Activated CD4-positive, alpha-beta T cell treated with anti-CD3 and anti-CD28 coated beads, Interleukin-2, amount 10 ng/mL, durations not matched to agents 24 days and 14 days (primary cell): ENCODE measurements at regions of chr17 and their contacts with region 1.

Region 1: DNA sequence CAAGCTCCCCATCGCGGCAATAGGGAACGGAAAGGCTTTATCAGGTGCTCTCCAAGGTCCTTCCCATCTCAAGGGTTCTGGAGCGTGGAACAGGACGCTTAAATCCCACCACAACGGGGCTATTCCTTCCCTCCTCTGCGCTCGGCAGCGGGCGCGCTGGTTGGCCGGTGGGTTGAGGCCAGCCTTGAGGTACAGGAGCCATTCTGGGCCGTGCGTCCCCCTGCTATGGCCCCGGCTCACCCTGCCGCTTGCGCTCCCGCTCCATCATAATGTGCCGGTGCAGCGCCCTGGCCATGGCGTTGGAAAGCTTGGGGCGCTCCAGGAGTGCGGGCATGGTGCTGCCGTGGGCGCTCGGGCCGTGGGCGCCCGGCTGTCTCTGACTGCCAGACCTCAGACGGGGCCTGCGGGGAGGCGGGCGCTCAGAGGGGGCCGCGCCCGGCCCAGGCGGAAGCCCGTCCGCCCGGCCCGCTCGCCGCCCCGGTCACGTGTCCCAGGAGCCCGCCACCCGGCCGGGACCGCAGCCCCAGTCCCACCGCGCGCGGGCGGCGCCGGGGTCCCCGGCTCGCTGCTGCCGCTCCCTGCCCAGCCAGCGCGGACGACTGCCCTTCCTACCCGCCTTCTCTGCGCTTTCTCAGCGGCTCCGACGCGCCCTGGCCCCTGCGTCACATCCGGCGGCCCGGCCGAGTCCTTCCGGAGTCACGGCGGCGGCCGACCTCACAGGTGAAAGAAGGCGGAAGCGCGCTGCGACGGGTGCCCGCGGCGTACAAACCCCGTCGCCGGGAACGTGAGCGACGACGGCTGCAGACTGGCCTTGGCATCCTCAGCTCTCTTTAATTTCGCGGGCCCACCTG is at the start of gene GPS2:
- DNase-seq: peak; percentile 99
- H3K4me3 Mint-ChIP-seq: peak within 1 kb of the TSS; percentile 85
- H3K27ac Mint-ChIP-seq: peak within 1 kb of the TSS; percentile 96
- H3K4me1 Mint-ChIP-seq: peaks cover 45% of the 10 kb centered on the region
- H3K27me3 Mint-ChIP-seq: no peaks in the 10 kb centered on the region
- total RNA-seq, gene GPS2: 51.5 and 56.2 TPM in 2 replicates

Region 2: DNA sequence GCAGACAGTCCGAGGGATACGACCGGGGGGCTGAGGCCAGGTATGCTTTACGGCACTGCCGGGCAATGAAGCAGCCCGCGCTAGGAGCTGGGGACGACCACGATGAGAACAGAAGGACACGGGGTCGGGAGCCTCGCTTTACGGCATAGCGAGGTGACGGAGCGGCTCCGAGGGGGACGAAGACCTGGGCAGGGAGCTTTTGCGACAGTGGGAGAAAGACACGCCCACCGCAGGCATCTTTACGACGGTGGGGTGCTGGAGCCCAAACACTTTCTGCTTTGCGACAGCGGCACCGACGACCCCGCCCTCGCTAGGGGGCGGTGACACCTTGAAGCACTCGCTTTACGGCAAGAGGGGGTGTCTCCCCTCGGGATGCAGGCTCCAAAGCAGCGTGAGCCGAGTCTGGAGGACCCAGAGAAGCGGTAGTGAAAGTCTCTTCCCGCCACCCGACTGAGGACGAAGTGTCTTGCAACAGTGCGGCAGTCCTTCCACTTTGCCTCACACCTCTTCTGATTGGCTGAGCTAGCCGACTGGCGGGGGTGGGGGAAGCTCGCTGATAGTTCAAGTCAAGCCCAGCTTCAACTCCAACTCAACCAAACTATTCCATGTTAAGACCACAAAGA is 14.5 kb after region 1 on chr17:
- intact Hi-C with region 1: loop called (anchors 2 kb)
- DNase-seq: peak; percentile 99
- H3K4me3 Mint-ChIP-seq: peak overlapping the region; percentile 91
- H3K27ac Mint-ChIP-seq: peak overlapping the region; percentile 91
- H3K4me1 Mint-ChIP-seq: peaks cover 38% of the 10 kb centered on the region
- H3K27me3 Mint-ChIP-seq: no peaks in the 10 kb centered on the region